Right ventricle myocardium inferior (tissue), 1 donor: ENCODE measurements at regions of chr10 and their contacts with region 1.

Region 1: GRCh38 chr10:24331457-24331856 is 122.5 kb downstream of the KIAA1217 start:
- DNase-seq: no peak
- ATAC-seq: peak; percentile 57

Region 2: DNA sequence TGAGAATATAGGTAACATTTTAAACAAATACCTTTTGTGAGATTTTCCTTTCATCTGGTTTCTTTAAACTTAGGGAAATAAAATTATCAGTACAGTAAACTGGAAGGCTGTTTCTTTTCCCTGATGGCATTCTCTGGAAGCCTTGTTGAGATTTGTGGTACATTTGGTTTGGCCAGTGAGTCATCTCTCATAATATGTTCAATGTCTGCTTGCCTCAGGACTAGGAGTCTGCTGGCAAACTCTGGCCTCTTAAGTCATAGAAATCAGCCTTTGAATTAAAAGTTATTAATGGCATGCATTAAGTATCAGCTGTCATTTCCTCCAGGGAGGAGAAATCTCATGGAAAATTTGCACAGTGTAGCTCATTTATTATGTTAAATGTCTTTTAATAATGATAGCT is 439.2 kb before region 1 on chr10:
- intact Hi-C with region 1: no loop called
- DNase-seq: no peak
- ATAC-seq: no peak

Region 3: DNA sequence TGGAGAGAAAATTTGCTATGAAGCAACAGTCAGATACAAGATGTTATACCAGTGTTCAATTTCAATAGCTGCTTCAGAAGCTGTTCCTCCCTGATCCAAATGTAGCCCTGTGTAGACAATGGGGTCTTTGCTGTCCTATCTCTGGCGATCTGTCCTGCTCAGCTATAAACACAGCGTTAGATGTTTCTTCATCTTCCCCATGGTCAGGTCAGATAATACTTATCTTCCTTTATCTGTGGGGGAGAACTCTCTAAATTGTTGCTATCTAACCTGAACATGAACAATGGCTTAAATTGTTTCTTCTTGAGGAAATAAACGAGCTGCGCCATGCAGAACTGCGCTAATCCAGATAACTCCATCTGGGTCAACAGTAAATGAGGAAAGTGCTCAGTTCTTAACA is 138.1 kb before region 1 on chr10:
- intact Hi-C with region 1: no loop called
- DNase-seq: no peak
- ATAC-seq: no peak

Region 4: GRCh38 chr10:24383681-24384106 is 52.2 kb after region 1 on chr10:
- intact Hi-C with region 1: loop called (anchors 5 kb)
- DNase-seq: peak; percentile 76
- ATAC-seq: peak; percentile 96